ENCODE measurements at regions of chr2 and their contacts with region 1.

Region 1: DNA sequence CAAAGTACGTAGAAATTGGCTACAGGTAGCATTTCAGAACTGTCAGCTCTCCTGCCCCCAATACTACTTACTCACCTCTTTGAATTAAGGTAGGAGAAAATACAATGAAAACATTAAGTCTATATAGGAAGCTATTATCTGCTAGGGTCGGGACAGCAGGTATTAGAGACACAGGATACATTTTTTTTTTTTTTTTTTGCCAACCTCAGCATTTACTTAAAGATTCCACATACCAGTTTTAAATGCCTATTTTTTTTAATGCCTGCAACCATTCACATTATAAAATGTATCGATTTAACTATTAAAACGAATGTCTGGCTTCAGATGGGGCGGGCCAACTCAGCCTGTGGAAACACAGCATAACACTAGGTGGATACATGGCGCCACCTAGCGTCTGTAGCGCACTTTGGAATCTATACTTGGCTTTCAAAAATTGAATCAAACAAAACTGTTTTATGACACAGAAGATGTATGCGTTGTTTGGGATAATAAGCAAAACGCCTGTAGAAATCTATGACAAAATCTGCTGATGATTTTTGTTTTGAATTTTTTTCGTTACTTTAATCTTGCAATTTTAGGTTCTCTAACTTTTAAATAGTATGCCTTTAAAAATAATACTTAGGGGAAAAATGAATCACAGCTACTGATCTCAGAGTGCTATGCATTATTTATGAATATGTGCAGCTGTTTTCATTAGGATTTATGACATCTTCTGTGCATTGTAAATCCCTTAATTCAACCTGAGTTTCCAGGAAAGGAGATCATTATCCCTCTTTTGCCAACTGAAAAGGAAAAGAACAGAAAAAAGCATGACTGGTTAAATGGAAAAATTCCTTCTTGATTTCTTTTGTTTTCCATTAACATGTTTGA is 261.0 kb downstream of the NYAP2 start:
- DNase-seq: peak; percentile 82 to 90
- H3K4me3 ChIP-seq: no peak overlapping the region
- H3K27ac ChIP-seq: no peak overlapping the region
- H3K4me1 ChIP-seq: no peaks in the 10 kb centered on the region
- H3K27me3 ChIP-seq: no peaks in the 10 kb centered on the region
- CTCF ChIP-seq: peak in 4 of 7 experiments; percentile 48 to 71 (median 68)
- EP300 ChIP-seq: no peak
- POLR2A ChIP-seq: no peak

Region 2: GRCh38 chr2:225122583-225123486 is 537.7 kb before region 1 on chr2:
- intact Hi-C with region 1: loop called (anchors 10 kb)
- DNase-seq: peak in 1 of 2 donors; percentile 37
- H3K4me3 ChIP-seq: no peak overlapping the region
- H3K27ac ChIP-seq: no peak overlapping the region
- H3K4me1 ChIP-seq: no peaks in the 10 kb centered on the region
- H3K27me3 ChIP-seq: no peaks in the 10 kb centered on the region
- CTCF ChIP-seq: peak in 3 of 7 experiments; percentile 33 to 47 (median 42)
- EP300 ChIP-seq: no peak
- POLR2A ChIP-seq: no peak

Region 3: DNA sequence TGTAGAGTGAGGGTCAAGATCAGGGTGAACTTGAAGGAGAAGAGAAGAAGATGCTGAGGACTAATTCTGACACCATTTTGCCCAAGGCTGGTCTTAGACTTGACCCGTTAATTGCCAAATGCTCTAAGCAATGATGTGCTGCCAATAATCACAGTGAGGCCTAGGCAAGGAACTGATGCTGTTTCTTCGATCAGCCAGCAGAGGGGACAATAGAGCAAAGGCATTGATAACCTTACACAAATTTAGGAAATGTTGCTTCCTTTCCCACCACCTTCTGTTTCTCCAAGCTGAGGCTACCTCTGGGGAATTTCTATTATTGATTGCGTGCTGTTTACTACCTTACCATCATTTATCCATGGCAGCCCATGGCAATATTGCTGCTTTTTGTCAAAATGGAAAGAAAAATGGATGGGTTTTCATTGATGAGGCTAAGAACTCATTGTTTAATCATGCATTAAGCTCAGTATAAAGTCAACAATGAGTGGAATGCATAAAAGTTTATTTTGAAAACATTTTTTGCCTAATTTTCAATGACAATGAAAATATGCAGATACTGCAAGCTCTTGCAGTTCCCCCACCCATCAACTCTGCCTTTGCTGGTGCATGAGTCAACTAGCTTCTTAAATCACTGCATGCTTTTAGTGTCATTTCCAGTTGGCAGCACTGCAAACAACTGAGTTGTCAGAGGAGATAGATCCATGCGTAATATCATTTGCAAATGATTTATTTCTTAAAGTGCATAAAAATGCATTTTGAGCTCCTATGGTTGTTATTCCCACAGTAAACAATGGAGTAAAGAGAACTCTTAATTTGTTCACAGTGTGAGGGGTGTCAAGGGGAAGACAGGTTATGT is 377.4 kb before region 1 on chr2:
- intact Hi-C with region 1: loop called (anchors 5 kb)
- DNase-seq: peak in 1 of 2 donors; percentile 51
- H3K4me3 ChIP-seq: no peak overlapping the region
- H3K27ac ChIP-seq: no peak overlapping the region
- H3K4me1 ChIP-seq: no peaks in the 10 kb centered on the region
- H3K27me3 ChIP-seq: no peaks in the 10 kb centered on the region
- CTCF ChIP-seq: peak in 5 of 7 experiments; percentile 36 to 80 (median 59)
- EP300 ChIP-seq: no peak
- POLR2A ChIP-seq: no peak

Measured in stomach (tissue), 19 donors.